Activated B cell treated with CpG ODN at 0.5 μM for 24 hours (primary cell): ENCODE measurements at regions of chr20 and their contacts with region 1.

Region 1: GRCh38 chr20:36550797-36551299 is 9.5 kb downstream of the MYL9 start:
- DNase-seq: no peak
- ATAC-seq: no peak
- H3K4me3 Mint-ChIP-seq: no peak overlapping the region
- H3K27ac Mint-ChIP-seq: no peak overlapping the region
- H3K4me1 Mint-ChIP-seq: peaks cover 2% of the 10 kb centered on the region
- H3K27me3 Mint-ChIP-seq: no peaks in the 10 kb centered on the region
- CTCF ChIP-seq: no peak

Region 2: DNA sequence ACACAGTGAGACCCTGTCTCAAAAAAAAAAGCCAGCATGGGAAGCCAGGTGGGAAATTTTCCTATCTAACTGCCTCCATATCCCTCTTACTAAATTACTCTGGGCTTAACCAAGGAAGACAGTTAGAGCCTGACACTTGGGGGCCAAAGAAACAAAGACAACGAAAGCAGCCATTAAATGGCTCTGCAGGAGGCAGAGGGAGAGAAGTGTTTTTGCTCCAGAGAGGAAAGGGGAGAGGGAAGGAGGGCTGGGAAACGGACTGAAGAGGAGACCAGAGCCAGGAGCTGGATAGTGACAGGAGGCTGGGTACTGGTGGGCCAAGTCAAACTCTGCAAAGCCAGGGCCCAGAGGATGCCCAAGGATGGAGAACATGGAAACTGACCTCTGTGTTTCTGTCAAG is 11.9 kb after region 1 on chr20:
- CTCF ChIA-PET with region 1: no interaction called
- POLR2A ChIA-PET with region 1: no interaction called
- intact Hi-C with region 1: no loop called
- DNase-seq: no peak
- ATAC-seq: no peak
- H3K4me3 Mint-ChIP-seq: no peak overlapping the region
- H3K27ac Mint-ChIP-seq: no peak overlapping the region
- H3K4me1 Mint-ChIP-seq: no peaks in the 10 kb centered on the region
- H3K27me3 Mint-ChIP-seq: no peaks in the 10 kb centered on the region
- CTCF ChIP-seq: no peak

Region 3: GRCh38 chr20:36573103-36573794 is 22.4 kb after region 1 on chr20 and contains the start of gene TGIF2:
- CTCF ChIA-PET with region 1: no interaction called
- POLR2A ChIA-PET with region 1: no interaction called
- intact Hi-C with region 1: loop called (anchors 1 kb)
- DNase-seq: peak; percentile 92
- ATAC-seq: peak; percentile 77
- H3K4me3 Mint-ChIP-seq: peak within 1 kb of the TSS; percentile 90
- H3K27ac Mint-ChIP-seq: peak within 1 kb of the TSS; percentile 91
- H3K4me1 Mint-ChIP-seq: peaks cover 36% of the 10 kb centered on the region
- H3K27me3 Mint-ChIP-seq: no peaks in the 10 kb centered on the region
- CTCF ChIP-seq: no peak
- total RNA-seq, gene TGIF2: 40.8 and 43.8 TPM in 2 replicates

Region 4: DNA sequence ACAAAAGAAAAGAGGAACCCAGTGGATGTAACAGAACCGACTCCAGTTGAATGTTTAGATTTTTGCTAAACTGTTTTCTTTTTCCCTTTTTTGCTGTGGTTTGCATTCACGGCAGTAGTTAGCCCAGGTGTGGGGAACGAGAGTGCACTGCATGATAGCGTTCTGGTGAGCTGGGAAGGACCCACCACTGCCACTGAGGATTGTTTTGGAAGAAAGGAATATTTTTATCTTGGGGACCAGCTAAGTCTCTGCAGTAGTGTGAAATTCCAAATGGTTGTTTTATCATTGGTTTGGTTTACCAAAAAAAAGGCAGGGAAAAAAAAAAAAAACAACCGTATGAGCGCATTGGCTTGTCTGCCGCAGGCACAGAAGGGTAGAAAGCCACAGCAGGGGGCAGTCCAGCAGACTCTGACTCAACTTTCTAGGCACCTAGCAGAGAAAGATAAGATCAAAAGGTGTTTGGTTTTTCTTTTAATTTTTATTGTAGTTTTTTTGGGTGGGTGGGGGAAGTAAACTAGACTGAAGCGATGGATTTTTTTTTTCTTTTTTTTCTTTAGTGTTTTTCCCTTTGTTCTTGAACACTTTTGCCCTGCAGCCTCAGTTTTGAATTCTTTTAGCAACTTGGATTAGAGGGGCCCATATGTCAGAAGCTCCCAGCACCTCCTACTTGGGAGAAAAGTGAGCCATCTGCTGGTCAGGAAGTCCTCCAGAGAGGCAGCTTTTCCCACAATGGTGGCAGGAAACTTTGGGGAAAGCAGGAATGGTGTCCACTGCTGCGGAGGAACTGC is 41.2 kb after region 1 on chr20:
- CTCF ChIA-PET with region 1: no interaction called
- POLR2A ChIA-PET with region 1: interaction called, 5 read pairs
- intact Hi-C with region 1: loop called (anchors 1 kb)
- DNase-seq: no peak
- ATAC-seq: no peak
- H3K4me3 Mint-ChIP-seq: no peak overlapping the region
- H3K27ac Mint-ChIP-seq: peak overlapping the region; percentile 53
- H3K4me1 Mint-ChIP-seq: peaks cover 70% of the 10 kb centered on the region
- H3K27me3 Mint-ChIP-seq: no peaks in the 10 kb centered on the region
- CTCF ChIP-seq: no peak

Region 5: DNA sequence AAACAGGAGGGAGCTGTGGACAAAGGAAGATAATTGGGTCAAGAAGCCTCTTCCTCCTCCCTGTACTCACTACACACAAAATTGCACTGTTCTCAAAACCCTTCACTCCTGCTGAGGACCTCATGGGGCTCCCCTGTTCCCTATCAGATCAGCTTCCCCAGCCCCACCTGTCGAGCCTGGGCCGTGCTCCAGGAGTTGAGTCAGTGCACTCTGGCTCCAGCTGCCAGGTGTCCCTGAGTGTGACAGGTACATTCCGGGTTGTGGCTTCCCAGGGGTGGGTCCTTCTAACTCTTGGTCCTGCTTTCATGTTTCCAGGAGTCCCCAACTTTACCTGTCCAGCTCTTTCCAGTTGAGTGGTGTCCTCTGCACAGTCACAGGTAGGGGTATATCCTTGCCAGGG is 63.1 kb after region 1 on chr20:
- CTCF ChIA-PET with region 1: no interaction called
- POLR2A ChIA-PET with region 1: no interaction called
- intact Hi-C with region 1: no loop called
- DNase-seq: no peak
- ATAC-seq: no peak
- H3K4me3 Mint-ChIP-seq: no peak overlapping the region
- H3K27ac Mint-ChIP-seq: no peak overlapping the region
- H3K4me1 Mint-ChIP-seq: no peaks in the 10 kb centered on the region
- H3K27me3 Mint-ChIP-seq: no peaks in the 10 kb centered on the region
- CTCF ChIP-seq: no peak

Region 6: DNA sequence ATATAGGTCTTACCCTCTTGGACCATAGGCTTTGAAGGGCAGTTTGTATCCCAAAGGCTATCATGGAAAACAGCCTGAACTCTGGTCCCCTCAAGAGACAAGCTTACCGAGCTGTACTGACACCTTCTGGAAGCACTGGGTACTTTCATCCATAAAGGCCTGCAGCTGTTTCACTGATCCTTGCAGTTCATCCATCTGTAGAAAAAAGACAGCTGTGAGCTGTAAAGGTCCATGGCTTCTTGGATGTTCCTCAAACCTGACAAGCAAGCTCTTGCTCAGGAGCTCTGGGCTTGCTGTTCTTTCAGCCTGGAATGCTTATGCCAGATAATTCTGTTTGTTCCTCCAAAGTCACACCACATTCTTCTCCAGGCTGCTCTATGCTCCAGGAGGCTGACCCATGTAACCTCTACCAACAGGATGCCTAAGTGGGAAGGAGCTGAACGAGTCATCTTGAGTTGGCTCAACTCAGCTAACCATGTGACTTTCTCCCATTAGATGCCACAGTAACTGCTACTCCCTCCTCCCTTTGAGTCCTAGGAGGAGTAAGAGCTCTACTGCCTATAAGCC is 203.9 kb after region 1 on chr20:
- CTCF ChIA-PET with region 1: no interaction called
- POLR2A ChIA-PET with region 1: no interaction called
- intact Hi-C with region 1: loop called (anchors 1 kb)
- DNase-seq: no peak
- ATAC-seq: peak; percentile 60
- H3K4me3 Mint-ChIP-seq: no peak overlapping the region
- H3K27ac Mint-ChIP-seq: peak overlapping the region; percentile 61
- H3K4me1 Mint-ChIP-seq: peaks cover 33% of the 10 kb centered on the region
- H3K27me3 Mint-ChIP-seq: no peaks in the 10 kb centered on the region
- CTCF ChIP-seq: no peak